ENCODE measurements at regions of chr9 and their contacts with region 1.

Region 1: DNA sequence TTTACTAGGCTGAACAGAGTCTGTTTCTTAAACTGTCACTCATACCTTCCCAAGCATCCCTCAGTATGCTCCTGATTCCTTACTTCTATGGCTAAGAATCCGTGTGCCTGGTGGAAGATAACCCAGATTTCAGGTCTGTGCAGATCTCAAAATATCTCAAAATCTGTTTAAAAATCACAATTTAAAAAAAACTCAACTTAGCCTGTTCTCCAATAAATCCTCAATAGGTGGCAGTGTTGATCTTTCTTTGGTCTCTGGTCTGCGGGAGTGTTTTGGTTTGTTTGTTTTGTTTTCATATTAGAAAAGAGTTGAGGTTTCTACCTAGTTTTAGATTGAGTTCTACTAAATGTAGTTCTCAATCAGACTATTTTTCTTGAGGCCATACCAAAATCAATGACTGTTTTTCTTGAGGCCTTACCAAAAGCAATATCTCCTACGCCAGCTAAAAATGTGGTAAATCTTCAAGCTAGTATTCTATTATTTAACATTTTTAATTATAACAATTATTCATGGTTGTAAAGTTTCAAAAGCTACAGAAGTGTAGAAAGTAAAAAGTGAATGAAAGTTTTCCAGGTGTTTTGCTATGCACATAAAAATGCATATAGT is 57.9 kb downstream of the TGFBR1 start:
- DNase-seq: peak; percentile 58
- CTCF ChIP-seq: peak; percentile 66

Region 2: DNA sequence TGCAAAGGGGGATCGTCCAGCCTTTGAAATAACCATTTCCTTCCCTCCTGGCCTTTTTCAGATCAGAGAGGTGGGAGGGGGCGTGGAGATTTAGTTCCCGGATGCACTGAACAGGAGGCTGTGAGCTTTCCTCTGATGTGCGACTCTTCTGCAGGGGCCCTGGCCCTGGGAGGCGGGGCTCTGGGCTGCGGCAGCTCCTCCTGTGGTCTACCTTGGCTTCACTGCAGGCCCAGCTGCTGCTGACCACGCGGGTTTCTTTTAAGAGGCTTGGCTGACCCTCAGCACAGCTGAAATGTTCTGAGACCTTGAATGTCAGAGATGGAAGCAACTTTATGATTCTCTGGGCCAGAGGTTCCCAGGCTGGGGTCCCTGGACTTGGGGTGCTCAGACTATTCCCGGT is 246.2 kb before region 1 on chr9:
- CTCF ChIA-PET with region 1: no interaction called
- POLR2A ChIA-PET with region 1: no interaction called
- DNase-seq: no peak
- CTCF ChIP-seq: no peak

Region 3: DNA sequence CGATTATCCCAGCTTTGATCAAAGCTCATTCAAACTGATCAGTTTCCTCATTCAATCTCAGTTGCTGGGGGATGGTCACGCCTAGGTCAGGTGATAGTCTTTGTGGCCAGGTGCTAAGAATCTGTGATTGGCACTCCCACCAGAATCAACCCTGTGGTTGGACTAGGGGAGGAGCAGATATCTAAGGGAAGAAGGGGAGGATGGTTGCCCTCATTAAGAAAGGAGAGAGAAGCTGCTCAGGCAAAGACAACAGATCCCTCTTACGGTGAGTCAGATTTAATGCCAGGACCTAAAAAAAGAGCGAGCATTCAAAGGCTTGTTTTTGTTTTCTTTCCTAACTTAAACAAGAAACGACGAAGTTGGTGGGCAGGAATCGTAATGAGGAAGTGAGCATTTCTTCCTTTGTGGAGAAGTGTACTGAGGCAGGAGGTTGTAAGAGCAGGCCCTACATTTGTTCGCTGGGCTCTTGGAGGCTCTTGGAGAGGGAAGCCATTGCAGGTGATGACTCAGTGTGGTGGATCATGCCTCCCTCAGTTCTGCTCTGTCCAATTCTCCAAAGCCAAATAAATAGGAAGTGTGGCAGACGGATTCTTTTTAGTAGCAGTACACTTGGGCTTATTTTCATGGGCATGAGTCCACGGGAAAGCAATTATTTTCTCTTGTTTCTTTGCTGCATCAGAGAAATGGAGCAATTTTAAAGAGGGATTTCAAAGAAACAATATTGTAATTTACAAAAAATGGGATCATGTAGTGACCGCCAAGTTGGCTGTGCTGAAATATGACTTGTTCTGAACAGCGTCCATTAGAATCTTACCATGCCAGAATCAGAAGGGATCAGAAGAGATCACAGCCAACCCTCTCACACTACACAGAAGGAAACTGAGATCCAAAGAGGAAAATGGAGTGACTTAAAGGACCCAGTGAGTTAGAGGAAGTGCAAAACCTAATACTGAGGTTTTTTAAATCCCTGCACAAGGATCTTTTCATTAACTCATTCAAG is 76.6 kb before region 1 on chr9:
- CTCF ChIA-PET with region 1: no interaction called
- POLR2A ChIA-PET with region 1: no interaction called
- DNase-seq: no peak
- CTCF ChIP-seq: no peak

Region 4: DNA sequence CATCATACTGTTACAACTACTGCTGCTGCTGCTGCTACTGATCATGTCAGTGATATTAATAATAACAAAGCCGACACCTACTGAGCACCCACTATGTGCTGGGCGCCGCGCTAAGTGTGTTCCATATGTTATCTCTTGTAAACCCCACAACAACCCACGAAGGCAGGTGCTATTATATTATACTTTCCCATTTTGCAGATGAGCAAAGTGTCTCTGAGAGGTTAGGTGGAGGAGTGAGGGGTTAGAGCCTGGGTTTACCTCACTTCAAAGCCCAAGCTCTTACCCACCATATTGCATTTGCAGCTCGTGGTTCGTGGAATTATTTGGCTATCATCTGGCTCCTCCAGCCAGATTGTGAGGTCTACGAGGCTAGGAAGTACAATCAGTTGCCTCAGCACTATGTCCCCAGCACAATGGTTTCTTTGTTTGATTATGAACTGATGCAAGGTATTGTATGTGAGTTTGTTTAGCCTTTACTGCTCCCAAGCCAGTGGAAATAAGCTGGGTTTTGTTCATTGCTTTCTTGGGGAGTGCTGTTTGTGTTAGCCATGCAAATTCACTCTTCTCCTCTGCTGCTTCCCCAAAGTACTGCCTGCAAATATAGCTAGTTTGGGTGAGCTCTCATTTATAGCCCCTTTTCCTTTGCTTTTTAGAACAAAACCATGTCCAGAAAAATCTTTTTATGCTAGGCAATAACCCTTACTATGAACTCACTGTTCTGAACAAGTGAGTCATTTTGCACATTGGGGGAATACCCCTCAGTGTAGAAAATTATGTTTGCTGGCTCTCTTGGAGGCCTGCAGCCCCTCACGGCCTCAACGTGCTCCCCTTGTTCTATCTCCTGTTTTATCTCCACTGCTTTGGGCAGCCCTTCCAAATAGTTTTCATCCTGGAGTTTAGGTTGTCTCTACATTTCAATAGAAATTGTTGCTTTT is 11.0 kb after region 1 on chr9:
- CTCF ChIA-PET with region 1: interaction called, 21 read pairs
- POLR2A ChIA-PET with region 1: no interaction called
- DNase-seq: peak; percentile 48
- CTCF ChIP-seq: no peak

Measured in GM10248 (cell line).